Activated CD4-positive, alpha-beta T cell treated with anti-CD3 and anti-CD28 coated beads for 36 hours (primary cell): ENCODE measurements at regions of chr13 and their contacts with region 1.

Region 1: DNA sequence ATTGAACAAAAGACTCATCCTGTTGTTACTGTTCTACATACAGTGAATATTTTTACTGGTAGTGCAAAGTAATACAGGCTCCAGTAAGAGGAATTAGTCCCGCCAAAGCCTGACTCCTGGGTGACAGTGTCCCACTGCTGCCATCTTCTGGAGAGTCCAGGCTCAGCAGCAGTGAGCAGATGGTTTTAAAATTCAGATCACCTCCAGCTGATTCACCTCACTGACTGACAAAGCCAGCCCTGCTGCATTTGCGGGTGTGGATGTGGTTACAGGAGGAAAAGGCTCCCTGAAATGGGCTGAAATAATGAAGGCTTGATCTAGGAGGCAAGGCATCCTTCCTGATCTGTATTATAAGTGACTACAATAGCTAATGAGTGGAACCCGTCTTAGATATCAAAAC is 18.3 kb downstream of the PABPC3 start:
- DNase-seq: peak; percentile 79
- ATAC-seq: peak; percentile 81
- H3K4me3 Mint-ChIP-seq: no peak overlapping the region
- H3K27ac Mint-ChIP-seq: no peak overlapping the region
- H3K4me1 Mint-ChIP-seq: no peaks in the 10 kb centered on the region
- H3K27me3 Mint-ChIP-seq: peaks cover 16% of the 10 kb centered on the region

Region 2: DNA sequence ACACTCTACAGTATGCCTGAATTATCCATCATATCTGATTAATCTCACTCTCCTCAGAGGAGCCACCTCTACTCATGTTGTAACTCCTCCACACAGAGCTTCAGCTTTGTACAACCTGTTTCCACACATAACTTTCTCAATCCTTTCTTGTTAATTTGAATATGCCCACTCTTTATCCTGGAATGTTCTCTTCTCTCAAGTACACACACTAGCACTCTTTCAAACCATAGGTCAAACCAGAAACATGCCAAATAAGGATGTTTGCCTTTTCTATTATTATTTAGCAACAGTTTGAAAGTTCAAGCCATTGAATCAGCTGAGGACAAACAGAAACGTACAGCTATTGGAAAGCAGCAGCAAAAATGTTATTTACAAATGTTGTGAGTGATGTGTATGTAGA is 1335.3 kb before region 1 on chr13:
- CTCF ChIA-PET with region 1: no interaction called
- POLR2A ChIA-PET with region 1: no interaction called
- intact Hi-C with region 1: no loop called
- DNase-seq: no peak
- ATAC-seq: no peak
- H3K4me3 Mint-ChIP-seq: no peak overlapping the region
- H3K27ac Mint-ChIP-seq: no peak overlapping the region
- H3K4me1 Mint-ChIP-seq: peaks cover 16% of the 10 kb centered on the region
- H3K27me3 Mint-ChIP-seq: no peaks in the 10 kb centered on the region

Region 3: DNA sequence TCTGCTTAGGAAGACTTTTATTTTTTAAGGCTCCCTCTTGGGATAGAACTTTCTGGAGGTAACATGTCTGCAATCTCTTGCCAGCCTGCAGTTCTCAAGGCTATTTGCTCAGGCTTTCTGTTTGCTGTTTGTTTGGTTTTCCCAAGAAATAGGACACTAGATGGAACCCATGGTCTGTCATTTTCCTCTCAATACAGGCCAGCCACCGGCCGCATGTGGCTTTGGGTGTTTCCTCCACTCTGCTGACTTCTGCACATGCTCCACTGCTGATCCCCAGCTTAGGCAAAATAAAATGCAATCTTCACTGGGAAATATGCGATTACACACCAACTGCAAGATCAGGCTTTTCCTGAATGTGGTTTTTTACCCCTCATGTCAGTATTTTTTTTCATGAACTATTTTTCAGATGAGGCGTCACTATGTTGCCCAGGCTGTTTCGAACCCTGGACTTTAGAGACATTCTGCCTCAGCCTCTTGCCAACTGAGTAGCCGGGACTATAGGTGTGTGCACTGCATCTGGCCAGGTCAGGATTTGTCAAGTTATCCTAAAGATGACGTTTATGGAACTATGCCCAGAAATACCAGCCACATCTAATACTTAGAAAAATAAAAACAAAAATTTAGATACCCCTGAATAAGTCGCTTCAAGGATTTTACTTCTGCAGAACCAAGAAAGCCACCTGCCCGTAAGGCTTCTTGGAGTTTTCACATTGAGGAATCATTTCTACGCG is 112.6 kb before region 1 on chr13:
- CTCF ChIA-PET with region 1: interaction called, 10 read pairs
- POLR2A ChIA-PET with region 1: no interaction called
- intact Hi-C with region 1: loop called (anchors 1 to 2 kb)
- DNase-seq: no peak
- ATAC-seq: no peak
- H3K4me3 Mint-ChIP-seq: no peak overlapping the region
- H3K27ac Mint-ChIP-seq: no peak overlapping the region
- H3K4me1 Mint-ChIP-seq: peaks cover 3% of the 10 kb centered on the region
- H3K27me3 Mint-ChIP-seq: peaks cover 25% of the 10 kb centered on the region

Region 4: DNA sequence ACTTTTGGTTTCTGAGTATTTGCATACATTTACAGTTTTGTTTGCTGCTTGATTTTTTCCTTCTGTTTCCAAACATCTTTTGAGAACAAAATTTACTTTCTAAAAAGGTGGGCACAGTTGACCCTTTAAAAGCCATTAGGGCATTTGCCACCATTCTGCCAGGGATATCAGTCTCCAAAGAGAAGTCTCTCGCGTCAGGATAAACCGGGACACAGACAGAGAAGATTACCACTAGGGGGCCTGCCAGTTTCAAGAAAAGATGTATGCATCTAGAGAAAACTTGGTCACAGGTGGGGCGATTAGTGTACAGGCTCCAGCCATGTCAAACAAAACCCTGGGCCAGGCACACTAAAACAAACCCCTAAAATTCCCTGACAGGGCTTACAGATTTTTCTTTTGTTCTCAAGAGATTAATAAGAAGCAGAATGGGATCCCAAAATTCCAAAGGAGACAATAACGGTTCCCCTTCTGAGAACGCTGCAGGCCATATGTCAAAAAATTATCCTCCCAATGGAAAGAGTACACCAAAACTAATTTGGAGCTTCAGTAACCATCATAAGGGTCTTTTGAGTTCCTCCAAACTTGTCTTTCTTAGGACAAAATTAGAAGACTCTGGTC is 29.0 kb before region 1 on chr13:
- CTCF ChIA-PET with region 1: interaction called, 6 read pairs
- POLR2A ChIA-PET with region 1: no interaction called
- intact Hi-C with region 1: loop called (anchors 1 kb)
- DNase-seq: peak; percentile 35
- ATAC-seq: no peak
- H3K4me3 Mint-ChIP-seq: no peak overlapping the region
- H3K27ac Mint-ChIP-seq: no peak overlapping the region
- H3K4me1 Mint-ChIP-seq: no peaks in the 10 kb centered on the region
- H3K27me3 Mint-ChIP-seq: peaks cover 2% of the 10 kb centered on the region

Region 5: GRCh38 chr13:25625414-25625813 is 511.2 kb after region 1 on chr13:
- CTCF ChIA-PET with region 1: no interaction called
- POLR2A ChIA-PET with region 1: no interaction called
- intact Hi-C with region 1: no loop called
- DNase-seq: no peak
- ATAC-seq: no peak
- H3K4me3 Mint-ChIP-seq: no peak overlapping the region
- H3K27ac Mint-ChIP-seq: no peak overlapping the region
- H3K4me1 Mint-ChIP-seq: no peaks in the 10 kb centered on the region
- H3K27me3 Mint-ChIP-seq: peaks cover 7% of the 10 kb centered on the region